ENCODE measurements at regions of chr4 and their contacts with region 1.

Region 1: GRCh38 chr4:10582059-10582686 is 102.4 kb downstream of the CLNK start:
- DNase-seq: peak; percentile 22
- H3K4me3 ChIP-seq: no peak overlapping the region
- H3K27ac ChIP-seq: no peak overlapping the region
- H3K4me1 ChIP-seq: peaks cover 14% of the 10 kb centered on the region
- CTCF ChIP-seq: peak; percentile 87

Region 2: GRCh38 chr4:10893395-10893794 is 311.2 kb after region 1 on chr4:
- CTCF ChIA-PET with region 1: no interaction called
- POLR2A ChIA-PET with region 1: no interaction called
- intact Hi-C with region 1: loop called (anchors 10 kb)
- DNase-seq: peak; percentile 5
- H3K4me3 ChIP-seq: no peak overlapping the region
- H3K27ac ChIP-seq: no peak overlapping the region
- H3K4me1 ChIP-seq: no peaks in the 10 kb centered on the region
- CTCF ChIP-seq: peak; percentile 64

Region 3: GRCh38 chr4:11428899-11429698 is 846.9 kb after region 1 on chr4:
- CTCF ChIA-PET with region 1: no interaction called
- POLR2A ChIA-PET with region 1: no interaction called
- intact Hi-C with region 1: loop called (anchors 10 kb)
- DNase-seq: no peak
- H3K4me3 ChIP-seq: no peak overlapping the region
- H3K27ac ChIP-seq: no peak overlapping the region
- H3K4me1 ChIP-seq: no peaks in the 10 kb centered on the region
- CTCF ChIP-seq: no peak